H1 (cell line): ENCODE measurements at regions of chr1 and their contacts with region 1.

Region 1: DNA sequence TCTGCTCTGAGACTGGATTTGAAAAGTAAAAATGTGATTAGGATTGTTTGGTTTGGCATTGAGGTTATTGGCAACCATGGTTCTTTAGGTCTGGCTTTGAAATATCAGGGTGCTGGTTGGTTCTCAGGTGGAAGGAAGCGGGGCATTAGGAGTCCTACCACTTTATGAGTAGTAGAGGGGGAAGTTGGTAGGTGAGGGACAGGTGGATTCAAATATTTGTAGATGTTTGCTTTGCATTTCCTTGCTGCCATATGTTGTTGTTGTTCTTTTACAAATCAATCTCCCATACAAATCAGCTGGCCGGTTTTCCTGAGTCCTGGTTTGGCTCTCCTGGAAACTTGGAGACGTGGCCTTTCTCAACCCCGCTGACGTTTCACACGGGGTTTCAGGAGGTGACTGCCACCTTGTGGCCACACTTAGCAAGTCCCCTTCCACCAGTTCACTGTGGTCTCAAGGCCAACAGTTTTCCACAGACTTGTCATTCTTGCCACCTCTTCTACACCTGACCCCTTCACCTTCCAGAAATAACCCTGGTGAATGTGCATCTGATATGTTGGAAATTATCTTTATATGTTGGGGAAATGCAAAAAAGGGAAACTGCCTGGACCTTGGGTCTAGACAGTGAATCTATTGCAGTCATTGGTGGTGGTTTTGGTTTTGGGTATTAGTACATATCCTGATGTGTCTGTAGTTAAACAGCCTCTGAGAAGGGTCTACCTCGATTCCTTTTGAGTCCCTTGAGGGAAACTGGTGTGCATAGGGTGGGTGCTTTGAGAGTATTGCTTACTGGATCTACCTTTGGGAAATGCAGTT is 127.0 kb upstream of the KIAA0040 start:
- DNase-seq: peak; percentile 21 to 73
- H3K4me3 ChIP-seq: no peak overlapping the region
- H3K27ac ChIP-seq: no peak overlapping the region
- H3K4me1 ChIP-seq: no peaks in the 10 kb centered on the region
- H3K27me3 ChIP-seq: no peaks in the 10 kb centered on the region
- CTCF ChIP-seq: peak; percentile 89 to 96 (median 95)
- EP300 ChIP-seq: no peak
- POLR2A ChIP-seq: no peak
- RAD21 ChIP-seq: peak; percentile 90 to 91

Region 2: GRCh38 chr1:175192630-175193526 is 126.7 kb before region 1 on chr1 and contains the start of gene KIAA0040:
- CTCF ChIA-PET with region 1: interaction called, 42 read pairs
- POLR2A ChIA-PET with region 1: no interaction called
- DNase-seq: peak in 1 of 2 experiments; percentile 72
- H3K4me3 ChIP-seq: peak within 1 kb of the TSS; percentile 62 to 85 (median 72)
- H3K27ac ChIP-seq: no peak within 1 kb of the TSS
- H3K4me1 ChIP-seq: peaks cover 0 to 5% (median 5%) of the 10 kb centered on the region in 4 experiments; a peak in 3 of 7 replicates
- H3K27me3 ChIP-seq: peaks cover 3 to 19% (median 15%) of the 10 kb centered on the region in 4 experiments
- CTCF ChIP-seq: peak in 2 of 3 experiments; percentile 16 to 25; a peak in 2 of 4 replicates
- EP300 ChIP-seq: no peak
- POLR2A ChIP-seq: no peak
- RAD21 ChIP-seq: no peak
- total RNA-seq, gene KIAA0040: 11.7 and 14.1 TPM in 2 replicates

Region 3: DNA sequence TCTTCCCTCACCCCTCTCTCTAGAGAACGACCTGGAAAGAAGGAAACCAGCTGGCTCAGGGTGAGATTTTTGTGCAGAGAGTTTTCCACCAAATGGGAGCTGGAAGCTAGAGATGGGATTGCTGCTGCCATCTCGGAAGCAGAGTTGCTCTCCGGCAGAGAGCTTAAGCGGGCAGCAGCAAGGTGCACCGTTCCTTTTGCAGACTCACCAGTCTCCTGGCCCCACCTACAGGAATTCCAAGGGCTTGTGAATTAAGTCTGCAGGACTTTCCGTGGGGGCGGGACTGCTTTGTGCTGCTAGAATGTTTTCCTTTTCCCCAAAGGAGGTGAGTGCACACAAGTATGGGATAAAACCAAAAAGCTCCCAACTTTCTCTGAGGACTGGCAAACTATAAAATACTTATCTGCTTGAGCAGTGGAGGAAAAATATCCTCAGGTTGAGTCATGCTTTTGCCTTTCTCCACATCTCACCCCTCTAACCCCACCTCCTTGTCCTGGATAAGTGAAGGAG is 97.9 kb before region 1 on chr1:
- CTCF ChIA-PET with region 1: interaction called, 11 read pairs
- POLR2A ChIA-PET with region 1: no interaction called
- DNase-seq: peak; percentile 21 to 57
- H3K4me3 ChIP-seq: peak overlapping the region in 1 of 4 experiments; percentile 3; a peak in 1 of 8 replicates
- H3K27ac ChIP-seq: no peak overlapping the region
- H3K4me1 ChIP-seq: peaks cover 2 to 12% (median 6%) of the 10 kb centered on the region in 4 experiments
- H3K27me3 ChIP-seq: no peaks in the 10 kb centered on the region; a peak in 1 of 7 replicates
- CTCF ChIP-seq: peak; percentile 14 to 33 (median 14); a peak in 3 of 4 replicates
- EP300 ChIP-seq: no peak
- POLR2A ChIP-seq: no peak
- RAD21 ChIP-seq: peak; percentile 55 to 61

Region 4: DNA sequence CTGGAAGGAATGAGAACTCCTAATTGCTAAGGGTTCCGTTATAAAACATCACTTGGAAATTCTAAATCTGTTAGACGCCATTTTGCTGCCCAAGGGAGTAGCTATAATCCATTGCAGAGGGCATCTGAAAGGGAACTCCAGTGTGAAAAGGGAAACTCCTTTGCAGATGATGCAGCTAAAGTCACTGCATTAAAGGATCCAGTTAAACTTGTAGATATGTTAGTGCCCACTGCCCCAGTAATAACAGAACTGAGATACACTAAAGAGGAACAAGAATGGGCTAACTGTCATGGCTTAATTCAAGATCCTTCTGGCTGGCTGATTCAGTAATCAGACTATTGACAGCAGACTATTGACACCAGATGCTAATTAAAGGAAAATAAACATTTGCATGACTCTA is 45.3 kb before region 1 on chr1:
- CTCF ChIA-PET with region 1: interaction called, 22 read pairs
- POLR2A ChIA-PET with region 1: no interaction called
- DNase-seq: no peak
- H3K4me3 ChIP-seq: no peak overlapping the region
- H3K27ac ChIP-seq: no peak overlapping the region
- H3K4me1 ChIP-seq: no peaks in the 10 kb centered on the region
- H3K27me3 ChIP-seq: no peaks in the 10 kb centered on the region
- CTCF ChIP-seq: no peak
- EP300 ChIP-seq: no peak
- POLR2A ChIP-seq: no peak
- RAD21 ChIP-seq: no peak

Region 5: GRCh38 chr1:175331891-175332290 is 12.3 kb after region 1 on chr1:
- CTCF ChIA-PET with region 1: interaction called, 30 read pairs
- POLR2A ChIA-PET with region 1: no interaction called
- DNase-seq: no peak
- H3K4me3 ChIP-seq: no peak overlapping the region
- H3K27ac ChIP-seq: no peak overlapping the region
- H3K4me1 ChIP-seq: peaks cover 0 to 5% (median 2%) of the 10 kb centered on the region in 4 experiments; a peak in 3 of 7 replicates
- H3K27me3 ChIP-seq: no peaks in the 10 kb centered on the region; a peak in 2 of 7 replicates
- CTCF ChIP-seq: no peak
- EP300 ChIP-seq: no peak
- POLR2A ChIP-seq: no peak
- RAD21 ChIP-seq: no peak

Region 6: DNA sequence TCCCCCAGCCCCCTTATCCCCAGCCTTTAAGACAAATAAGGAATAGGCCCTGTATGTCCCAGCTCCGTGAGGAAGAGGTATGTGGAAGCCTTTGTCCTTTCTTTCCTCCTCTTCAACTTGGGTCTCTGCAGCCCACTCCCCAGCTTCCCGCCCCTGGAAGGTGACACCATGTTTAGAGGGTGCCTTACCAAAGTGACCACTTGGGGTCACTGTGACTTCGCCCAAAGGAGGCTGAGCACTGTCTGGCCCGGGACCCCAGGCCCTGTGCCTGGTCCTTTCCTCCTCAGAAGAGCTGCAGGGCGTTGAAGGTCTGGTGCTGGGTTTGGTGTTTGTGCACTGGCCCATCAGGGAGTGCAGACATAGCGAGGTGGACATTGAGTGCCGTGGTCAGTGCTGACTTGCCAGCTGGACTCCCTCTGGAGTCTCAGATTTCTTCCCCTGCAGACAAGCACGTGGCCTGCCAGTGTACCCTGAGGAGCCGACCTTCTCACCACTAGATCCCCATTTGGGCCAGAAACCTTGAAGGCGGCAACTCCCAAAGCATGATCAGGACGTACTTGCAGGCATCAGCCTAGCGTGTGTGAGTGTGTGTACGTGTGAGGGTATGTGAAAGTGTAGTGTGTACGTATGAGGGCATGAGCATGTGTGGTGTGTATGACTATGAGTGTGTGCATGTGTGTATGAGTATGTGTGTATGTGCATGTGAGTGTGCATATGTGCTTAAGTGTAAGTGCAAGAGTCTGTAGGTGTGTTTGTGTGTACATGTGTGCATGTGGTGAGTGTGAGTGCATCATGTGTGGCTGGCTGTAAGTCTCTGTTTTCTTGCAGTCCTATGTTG is 54.4 kb after region 1 on chr1:
- CTCF ChIA-PET with region 1: interaction called, 16 read pairs
- POLR2A ChIA-PET with region 1: no interaction called
- DNase-seq: peak; percentile 21 to 85
- H3K4me3 ChIP-seq: no peak overlapping the region
- H3K27ac ChIP-seq: no peak overlapping the region
- H3K4me1 ChIP-seq: peaks cover 0 to 4% (median 0%) of the 10 kb centered on the region in 4 experiments; a peak in 3 of 7 replicates
- H3K27me3 ChIP-seq: no peaks in the 10 kb centered on the region; a peak in 1 of 7 replicates
- CTCF ChIP-seq: peak; percentile 86 to 91 (median 90)
- EP300 ChIP-seq: no peak
- POLR2A ChIP-seq: no peak
- RAD21 ChIP-seq: peak; percentile 97 to 99